Heart left ventricle (tissue), 16 donors: ENCODE measurements at regions of chr4 and their contacts with region 1.

Region 1: DNA sequence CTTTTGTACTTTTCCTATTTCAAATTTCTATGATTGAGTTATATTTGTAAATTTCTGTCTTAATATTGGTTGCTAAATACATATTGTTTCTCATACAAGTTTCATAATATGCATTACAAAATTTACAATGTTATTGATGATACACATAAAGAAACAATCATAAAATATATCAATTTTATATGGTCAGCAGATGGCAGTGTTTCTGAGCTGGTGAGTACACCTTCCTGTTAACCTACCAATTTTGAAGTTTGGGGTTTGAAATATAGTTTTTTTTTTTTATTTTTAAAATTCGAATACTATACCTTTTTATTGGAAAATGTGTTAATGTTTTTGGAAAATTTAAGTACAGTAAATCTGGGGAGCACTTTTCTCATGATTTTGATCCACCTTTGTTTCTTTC is 1953.1 kb upstream of the ADGRL3 start:
- DNase-seq: no peak
- ATAC-seq: no peak
- H3K4me3 ChIP-seq: no peak overlapping the region
- H3K27ac ChIP-seq: no peak overlapping the region
- H3K4me1 ChIP-seq: no peaks in the 10 kb centered on the region
- H3K27me3 ChIP-seq: no peaks in the 10 kb centered on the region
- CTCF ChIP-seq: peak in 5 of 12 donors; percentile 10 to 30 (median 26)
- POLR2A ChIP-seq: no peak

Region 2: GRCh38 chr4:59994118-59994517 is 747.1 kb after region 1 on chr4:
- intact Hi-C with region 1: loop called in 1 of 10 experiments (anchors 10 kb)
- DNase-seq: peak in 1 of 5 donors; percentile 20
- ATAC-seq: peak in 1 of 4 donors; percentile 62
- H3K4me3 ChIP-seq: no peak overlapping the region
- H3K27ac ChIP-seq: no peak overlapping the region
- H3K4me1 ChIP-seq: no peaks in the 10 kb centered on the region
- H3K27me3 ChIP-seq: no peaks in the 10 kb centered on the region
- CTCF ChIP-seq: peak in 10 of 12 donors; percentile 19 to 44 (median 33)
- POLR2A ChIP-seq: no peak

Region 3: GRCh38 chr4:60195256-60195655 is 948.2 kb after region 1 on chr4:
- intact Hi-C with region 1: loop called in 1 of 10 experiments (anchors 10 kb)
- DNase-seq: no peak
- ATAC-seq: no peak
- H3K4me3 ChIP-seq: no peak overlapping the region
- H3K27ac ChIP-seq: no peak overlapping the region
- H3K4me1 ChIP-seq: no peaks in the 10 kb centered on the region
- H3K27me3 ChIP-seq: no peaks in the 10 kb centered on the region
- CTCF ChIP-seq: no peak
- POLR2A ChIP-seq: no peak